ENCODE measurements at regions of chr1 and their contacts with region 1.

Region 1: DNA sequence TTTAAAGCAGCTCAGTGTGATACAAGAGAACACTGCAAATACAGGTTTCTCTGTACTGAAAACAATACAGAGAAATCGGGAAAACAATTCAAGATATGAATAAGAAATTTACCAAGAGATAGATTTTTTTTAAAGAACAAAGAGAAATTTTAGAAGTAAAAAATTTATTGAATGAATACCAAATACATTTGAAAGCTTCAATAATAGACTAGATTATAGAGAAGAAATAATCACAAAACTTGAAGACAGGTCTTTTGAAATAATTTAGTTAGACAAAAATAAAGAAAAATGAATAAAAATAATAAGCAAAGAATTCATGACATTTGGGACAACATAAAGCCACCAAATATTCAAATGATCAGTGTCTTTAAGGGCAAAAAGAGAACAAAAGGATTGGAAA is 13.6 kb upstream of the FMO4 start:
- DNase-seq: no peak
- ATAC-seq: no peak
- H3K4me3 ChIP-seq: no peak overlapping the region
- H3K4me1 ChIP-seq: no peaks in the 10 kb centered on the region
- CTCF ChIP-seq: no peak

Region 2: DNA sequence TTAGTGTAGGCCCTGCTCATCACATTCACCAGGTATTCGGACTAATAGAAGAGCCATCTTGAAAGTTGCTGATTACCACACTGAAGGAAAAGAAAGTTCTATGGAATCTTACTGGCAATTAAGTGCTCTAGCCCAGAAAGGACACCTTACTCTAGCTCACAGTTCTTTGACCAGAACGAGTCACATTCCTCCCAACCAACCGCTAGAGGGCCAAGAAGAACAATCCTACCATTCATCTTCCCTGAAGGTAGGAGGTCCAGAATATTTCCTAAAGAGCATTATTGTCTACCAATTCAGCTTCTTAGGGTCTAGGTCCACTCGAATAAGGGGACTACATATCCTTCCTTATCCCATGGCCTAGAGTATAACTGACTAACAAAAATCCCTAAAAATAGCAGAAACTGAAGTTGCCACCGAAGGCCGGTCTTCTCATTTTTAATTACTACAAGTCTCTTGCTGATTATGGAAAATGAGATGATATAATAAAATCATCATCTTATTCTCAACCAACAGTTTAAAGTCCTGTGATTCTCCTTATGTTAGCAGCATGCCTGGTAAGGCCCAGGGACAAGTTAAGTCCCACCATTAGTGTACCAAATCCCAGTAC is 54.8 kb before region 1 on chr1:
- intact Hi-C with region 1: loop called in 1 of 2 experiments (anchors 10 kb)
- DNase-seq: peak in 1 of 3 donors; percentile 65
- ATAC-seq: peak; percentile 70
- H3K4me3 ChIP-seq: no peak overlapping the region
- H3K4me1 ChIP-seq: no peaks in the 10 kb centered on the region
- CTCF ChIP-seq: peak; percentile 29